ENCODE measurements at regions of chr2 and their contacts with region 1.

Region 1: GRCh38 chr2:134282629-134283400 is 28.9 kb downstream of the MGAT5 start:
- DNase-seq: peak; percentile 73
- H3K4me3 Mint-ChIP-seq: no peak overlapping the region
- H3K27ac Mint-ChIP-seq: peak overlapping the region; percentile 44
- H3K4me1 Mint-ChIP-seq: peaks cover 36% of the 10 kb centered on the region
- H3K27me3 Mint-ChIP-seq: no peaks in the 10 kb centered on the region

Region 2: DNA sequence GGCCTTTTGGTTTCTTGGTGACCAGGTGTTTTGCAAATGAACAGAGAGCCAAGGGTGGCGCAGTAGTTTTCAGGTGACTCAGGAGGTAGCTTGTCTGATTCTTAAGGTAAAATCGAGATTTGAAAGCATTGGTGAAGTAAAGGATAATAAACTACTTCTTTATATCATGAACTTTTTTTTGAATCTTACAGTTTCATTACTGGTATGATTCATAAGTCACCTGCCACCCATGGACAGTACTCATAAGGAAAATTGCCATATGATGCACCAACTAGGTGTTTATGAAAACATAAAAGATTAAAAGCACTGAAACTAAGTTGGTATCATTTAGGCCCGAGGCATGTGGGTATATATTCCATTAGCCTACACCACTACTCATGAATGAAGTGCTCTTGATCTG is 113.0 kb before region 1 on chr2:
- CTCF ChIA-PET with region 1: no interaction called
- intact Hi-C with region 1: loop called (anchors 1 kb)
- DNase-seq: peak; percentile 45
- H3K4me3 Mint-ChIP-seq: no peak overlapping the region
- H3K27ac Mint-ChIP-seq: no peak overlapping the region
- H3K4me1 Mint-ChIP-seq: peaks cover 68% of the 10 kb centered on the region
- H3K27me3 Mint-ChIP-seq: no peaks in the 10 kb centered on the region

Region 3: DNA sequence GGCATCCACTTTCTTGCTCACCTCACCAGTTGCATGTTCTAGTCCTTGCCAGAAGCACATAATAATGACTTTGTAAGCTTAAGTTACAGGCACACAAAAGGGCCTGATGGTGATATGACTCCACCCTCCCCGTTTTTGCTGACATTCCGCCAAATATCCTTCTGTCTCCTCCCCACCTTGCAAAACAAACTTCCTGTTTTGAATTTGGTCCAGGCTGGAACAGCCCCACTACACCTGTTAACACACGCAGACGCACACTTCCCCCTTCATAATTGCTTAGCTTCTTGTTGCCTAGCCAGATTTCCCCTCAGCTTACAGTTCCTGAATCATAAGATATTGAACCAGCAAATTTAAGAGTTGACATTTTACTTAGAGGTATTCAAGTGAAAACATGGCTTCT is 29.0 kb before region 1 on chr2 and contains the start of gene MGAT5:
- CTCF ChIA-PET with region 1: no interaction called
- intact Hi-C with region 1: loop called (anchors 1 kb)
- DNase-seq: no peak
- H3K4me3 Mint-ChIP-seq: no peak within 1 kb of the TSS
- H3K27ac Mint-ChIP-seq: no peak within 1 kb of the TSS
- H3K4me1 Mint-ChIP-seq: peaks cover 82% of the 10 kb centered on the region
- H3K27me3 Mint-ChIP-seq: peaks cover 2% of the 10 kb centered on the region
- total RNA-seq, gene MGAT5: 11.6 to 13.0 TPM

Region 4: GRCh38 chr2:134261398-134262131 is 21.2 kb before region 1 on chr2:
- CTCF ChIA-PET with region 1: interaction called, 4 read pairs
- intact Hi-C with region 1: loop called (anchors 1 kb)
- DNase-seq: peak; percentile 43
- H3K4me3 Mint-ChIP-seq: no peak overlapping the region
- H3K27ac Mint-ChIP-seq: no peak overlapping the region
- H3K4me1 Mint-ChIP-seq: peaks cover 66% of the 10 kb centered on the region
- H3K27me3 Mint-ChIP-seq: no peaks in the 10 kb centered on the region

Region 5: DNA sequence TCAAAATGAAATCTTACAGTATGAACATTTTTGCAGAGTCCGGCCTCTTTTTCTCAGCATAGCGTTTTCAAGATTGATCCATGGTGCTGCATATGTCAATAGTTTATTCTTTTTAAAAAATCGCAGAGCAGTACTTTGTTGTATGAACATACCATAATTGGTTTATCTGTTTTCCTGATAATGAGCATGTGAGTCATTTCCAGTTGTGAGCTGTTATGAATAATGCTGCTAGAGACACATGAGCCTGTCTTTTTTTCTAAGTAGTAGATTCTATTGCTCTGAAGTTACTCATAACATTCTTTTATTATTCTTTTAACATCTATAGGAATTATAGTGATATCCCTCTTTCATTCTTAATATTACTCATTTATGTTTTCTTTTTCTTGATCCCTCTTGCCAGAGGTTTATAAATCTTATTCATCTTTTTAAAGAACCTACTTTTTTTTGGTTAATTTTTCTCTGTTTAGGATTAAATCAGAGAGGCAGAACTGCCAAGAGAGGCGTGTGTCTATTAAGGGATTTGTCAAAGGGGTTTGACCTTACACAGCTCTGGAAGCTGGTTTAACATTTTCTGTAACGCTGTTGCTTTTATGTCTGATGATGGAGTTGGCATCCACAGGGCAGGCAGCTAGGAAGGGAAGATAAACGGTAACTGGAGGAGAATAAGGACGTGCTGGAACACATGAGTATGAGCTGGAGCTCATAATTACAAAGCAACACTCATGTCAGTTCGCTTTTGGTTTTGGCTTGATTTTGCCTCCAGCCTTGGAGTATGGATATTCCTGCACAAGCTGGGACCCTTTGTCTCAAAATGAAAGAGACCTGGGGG is 18.5 kb after region 1 on chr2:
- CTCF ChIA-PET with region 1: interaction called, 4 read pairs
- intact Hi-C with region 1: loop called (anchors 1 kb)
- DNase-seq: no peak
- H3K4me3 Mint-ChIP-seq: peak overlapping the region; percentile 5
- H3K27ac Mint-ChIP-seq: no peak overlapping the region
- H3K4me1 Mint-ChIP-seq: peaks cover 46% of the 10 kb centered on the region
- H3K27me3 Mint-ChIP-seq: no peaks in the 10 kb centered on the region

Region 6: DNA sequence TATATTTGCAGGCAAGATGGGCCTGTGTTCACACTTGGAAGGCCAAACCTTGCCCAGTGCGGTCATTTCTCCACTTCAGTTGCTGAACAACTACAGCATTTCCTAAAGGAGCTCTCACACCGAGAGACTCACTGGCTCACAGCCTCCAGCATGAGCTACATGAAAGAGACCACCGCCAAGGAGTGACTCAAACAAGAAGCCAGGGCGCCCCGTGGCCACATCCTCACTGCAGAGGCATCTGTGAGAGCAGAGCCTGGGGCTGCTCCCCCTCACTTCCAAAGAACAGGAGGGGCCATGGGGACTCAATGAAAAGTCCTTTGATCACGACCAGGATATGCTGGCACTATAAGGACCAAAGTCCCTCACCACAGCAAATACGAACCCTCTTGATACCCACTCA is 386.0 kb after region 1 on chr2:
- CTCF ChIA-PET with region 1: no interaction called
- intact Hi-C with region 1: loop called (anchors 10 kb)
- DNase-seq: peak; percentile 95
- H3K4me3 Mint-ChIP-seq: no peak overlapping the region
- H3K27ac Mint-ChIP-seq: no peak overlapping the region
- H3K4me1 Mint-ChIP-seq: peaks cover 63% of the 10 kb centered on the region
- H3K27me3 Mint-ChIP-seq: peaks cover 29% of the 10 kb centered on the region

Region 7: DNA sequence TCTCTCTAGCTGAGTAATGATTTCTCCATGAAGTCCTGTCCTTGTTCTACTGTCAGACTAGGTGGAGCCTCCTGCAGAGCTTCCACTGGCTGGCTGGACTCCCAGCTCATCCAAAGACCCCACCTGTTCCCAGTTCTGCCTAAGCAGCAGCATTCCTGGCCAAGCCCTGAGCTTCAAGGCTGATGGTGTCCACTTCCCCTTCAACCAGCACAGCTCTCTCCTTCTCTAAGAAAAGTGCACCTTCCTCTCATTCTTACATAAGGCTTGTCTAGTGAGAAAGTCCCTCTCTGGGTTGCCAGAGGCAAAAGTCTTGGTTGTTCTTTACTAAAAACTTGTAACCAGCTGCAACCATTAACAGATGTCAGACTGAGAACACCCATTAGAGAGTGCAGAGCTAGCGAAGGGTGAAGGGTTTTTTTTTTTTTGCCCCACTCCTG is 1776.2 kb after region 1 on chr2:
- CTCF ChIA-PET with region 1: no interaction called
- intact Hi-C with region 1: loop called (anchors 10 kb)
- DNase-seq: no peak
- H3K4me3 Mint-ChIP-seq: no peak overlapping the region
- H3K27ac Mint-ChIP-seq: no peak overlapping the region
- H3K4me1 Mint-ChIP-seq: peaks cover 59% of the 10 kb centered on the region
- H3K27me3 Mint-ChIP-seq: no peaks in the 10 kb centered on the region